GM12878 (cell line): ENCODE measurements at regions of chr10 and their contacts with region 1.

Region 1: DNA sequence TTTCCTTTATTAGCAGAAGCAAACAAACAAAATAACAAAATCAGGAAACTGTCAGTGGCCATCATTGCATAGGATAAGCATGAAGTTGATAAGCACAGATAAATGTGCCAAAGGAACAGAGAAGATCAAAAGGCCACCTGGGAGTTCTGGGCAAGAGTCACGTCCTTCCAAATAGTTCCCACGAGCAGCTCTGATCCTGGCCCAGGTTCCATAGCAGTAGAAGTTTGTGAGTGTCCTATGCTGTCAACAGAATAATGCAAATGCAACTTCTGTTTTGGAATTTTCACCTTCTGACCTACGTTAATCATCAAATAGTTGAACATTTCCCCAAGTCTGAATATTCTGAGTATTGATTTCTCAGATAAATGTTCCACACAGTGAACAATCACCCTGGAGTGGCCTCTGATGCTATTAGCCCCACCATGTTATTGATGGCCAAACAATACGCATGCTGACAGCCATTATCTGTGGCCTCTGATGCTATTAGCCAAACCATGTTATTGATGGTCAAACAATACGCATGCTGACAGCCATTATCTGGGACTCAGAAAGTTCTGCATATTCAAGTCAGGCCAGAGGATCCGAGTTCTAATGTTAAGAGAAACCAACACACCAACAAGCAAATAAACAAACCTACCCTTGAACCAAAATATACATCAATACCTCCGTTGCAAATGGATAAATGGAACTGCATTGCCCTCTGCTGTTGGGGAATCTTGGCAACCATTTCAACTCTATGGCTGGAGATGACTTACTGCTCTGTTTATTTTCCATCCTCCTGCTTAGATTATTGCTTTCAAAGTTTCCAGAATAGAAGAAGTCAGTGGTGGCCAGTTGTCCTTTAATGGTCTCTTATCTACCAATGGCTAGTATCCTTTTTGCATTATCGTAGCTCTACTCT is 63.3 kb downstream of the MRC1 start:
- DNase-seq: no peak
- ATAC-seq: peak; percentile 68
- H3K4me3 ChIP-seq: no peak overlapping the region
- H3K27ac ChIP-seq: no peak overlapping the region
- H3K4me1 ChIP-seq: no peaks in the 10 kb centered on the region
- H3K27me3 ChIP-seq: no peaks in the 10 kb centered on the region
- CTCF ChIP-seq: peak; percentile 33 to 52 (median 35); a peak in 4 of 6 replicates
- EP300 ChIP-seq: no peak
- POLR2A ChIP-seq: no peak
- RAD21 ChIP-seq: peak; percentile 51

Region 2: DNA sequence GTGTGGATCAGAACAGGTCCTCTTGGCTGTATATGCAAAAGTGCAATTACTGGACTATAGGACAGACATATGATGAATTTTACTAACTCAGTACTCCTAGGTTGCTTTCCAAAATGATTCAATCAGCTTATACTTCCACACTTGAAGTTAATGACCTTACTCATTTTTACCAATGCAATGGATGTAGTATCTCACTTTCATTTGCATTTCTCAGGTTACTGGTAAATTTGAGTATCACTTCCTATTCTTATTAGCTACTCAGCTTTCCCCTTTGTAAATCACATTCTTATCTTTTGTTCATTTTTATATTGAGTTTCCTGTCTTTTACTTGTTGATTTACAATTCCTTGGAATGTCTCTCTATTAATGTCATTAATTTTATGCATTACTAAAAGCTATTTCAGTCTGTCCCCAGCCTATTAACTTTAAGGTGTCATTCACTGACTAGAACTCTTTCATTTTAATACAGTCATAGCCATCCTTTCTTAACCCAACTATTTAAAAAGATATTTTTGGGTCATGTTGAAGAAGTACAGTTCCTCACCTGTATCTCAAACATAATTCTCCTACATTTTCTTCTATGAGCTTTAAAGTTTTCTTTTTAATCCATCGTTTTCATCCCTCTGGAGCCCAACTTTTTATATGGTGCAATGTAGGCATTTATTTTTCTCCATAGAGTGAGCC is 555.8 kb before region 1 on chr10:
- CTCF ChIA-PET with region 1: no interaction called
- POLR2A ChIA-PET with region 1: no interaction called
- RAD21 ChIA-PET with region 1: no interaction called
- SMC1A ChIA-PET with region 1: no interaction called
- in situ Hi-C with region 1: no loop called
- intact Hi-C with region 1: loop called (anchors 5 kb)
- DNase-seq: no peak
- ATAC-seq: peak; percentile 77
- H3K4me3 ChIP-seq: no peak overlapping the region
- H3K27ac ChIP-seq: no peak overlapping the region
- H3K4me1 ChIP-seq: no peaks in the 10 kb centered on the region
- H3K27me3 ChIP-seq: no peaks in the 10 kb centered on the region
- CTCF ChIP-seq: no peak
- EP300 ChIP-seq: no peak
- POLR2A ChIP-seq: no peak
- RAD21 ChIP-seq: no peak

Region 3: GRCh38 chr10:17737027-17737965 is 135.1 kb before region 1 on chr10:
- CTCF ChIA-PET with region 1: no interaction called
- POLR2A ChIA-PET with region 1: no interaction called
- RAD21 ChIA-PET with region 1: no interaction called
- SMC1A ChIA-PET with region 1: no interaction called
- in situ Hi-C with region 1: no loop called
- intact Hi-C with region 1: loop called (anchors 2 kb)
- DNase-seq: no peak
- ATAC-seq: peak; percentile 61
- H3K4me3 ChIP-seq: no peak overlapping the region
- H3K27ac ChIP-seq: no peak overlapping the region
- H3K4me1 ChIP-seq: no peaks in the 10 kb centered on the region
- H3K27me3 ChIP-seq: no peaks in the 10 kb centered on the region
- CTCF ChIP-seq: peak; percentile 40 to 63 (median 58); a peak in 5 of 6 replicates
- EP300 ChIP-seq: no peak
- POLR2A ChIP-seq: no peak
- RAD21 ChIP-seq: peak; percentile 31; the same call in 1 of the 2 replicates

Region 4: GRCh38 chr10:17805921-17806577 is 66.4 kb before region 1 on chr10:
- CTCF ChIA-PET with region 1: no interaction called
- POLR2A ChIA-PET with region 1: no interaction called
- RAD21 ChIA-PET with region 1: interaction called, 3 read pairs
- SMC1A ChIA-PET with region 1: no interaction called
- in situ Hi-C with region 1: no loop called
- intact Hi-C with region 1: loop called (anchors 5 kb)
- DNase-seq: no peak
- ATAC-seq: peak; percentile 98
- H3K4me3 ChIP-seq: no peak overlapping the region
- H3K27ac ChIP-seq: no peak overlapping the region
- H3K4me1 ChIP-seq: no peaks in the 10 kb centered on the region
- H3K27me3 ChIP-seq: peaks cover 0 to 5% of the 10 kb centered on the region in 2 experiments; a peak in 2 of 4 replicates
- CTCF ChIP-seq: peak; percentile 39; a peak in 5 of 6 replicates
- EP300 ChIP-seq: no peak
- POLR2A ChIP-seq: no peak
- RAD21 ChIP-seq: peak; percentile 40

Region 5: GRCh38 chr10:17847585-17848296 is 24.7 kb before region 1 on chr10:
- CTCF ChIA-PET with region 1: interaction called, 17 read pairs
- POLR2A ChIA-PET with region 1: no interaction called
- RAD21 ChIA-PET with region 1: interaction called, 5 read pairs
- SMC1A ChIA-PET with region 1: interaction called, 30 read pairs
- in situ Hi-C with region 1: no loop called
- intact Hi-C with region 1: loop called (anchors 1 kb)
- DNase-seq: no peak
- ATAC-seq: peak; percentile 88
- H3K4me3 ChIP-seq: no peak overlapping the region
- H3K27ac ChIP-seq: no peak overlapping the region
- H3K4me1 ChIP-seq: no peaks in the 10 kb centered on the region
- H3K27me3 ChIP-seq: no peaks in the 10 kb centered on the region; a peak in 1 of 4 replicates
- CTCF ChIP-seq: peak; percentile 14 to 53 (median 38); a peak in 4 of 6 replicates
- EP300 ChIP-seq: no peak
- POLR2A ChIP-seq: no peak
- RAD21 ChIP-seq: peak; percentile 70

Region 6: GRCh38 chr10:17910125-17910789 is 37.8 kb after region 1 on chr10:
- CTCF ChIA-PET with region 1: no interaction called
- POLR2A ChIA-PET with region 1: no interaction called
- RAD21 ChIA-PET with region 1: no interaction called
- SMC1A ChIA-PET with region 1: no interaction called
- in situ Hi-C with region 1: no loop called
- intact Hi-C with region 1: no loop called
- DNase-seq: peak; percentile 2
- ATAC-seq: peak; percentile 85
- H3K4me3 ChIP-seq: no peak overlapping the region
- H3K27ac ChIP-seq: no peak overlapping the region
- H3K4me1 ChIP-seq: no peaks in the 10 kb centered on the region
- H3K27me3 ChIP-seq: no peaks in the 10 kb centered on the region
- CTCF ChIP-seq: peak; percentile 51 to 54 (median 52); a peak in 5 of 6 replicates
- EP300 ChIP-seq: no peak
- POLR2A ChIP-seq: no peak
- RAD21 ChIP-seq: peak; percentile 69

Region 7: GRCh38 chr10:17989908-17990767 is 117.7 kb after region 1 on chr10:
- CTCF ChIA-PET with region 1: no interaction called
- POLR2A ChIA-PET with region 1: no interaction called
- RAD21 ChIA-PET with region 1: no interaction called
- SMC1A ChIA-PET with region 1: no interaction called
- in situ Hi-C with region 1: no loop called
- intact Hi-C with region 1: no loop called
- DNase-seq: peak; percentile 41
- ATAC-seq: peak; percentile 95
- H3K4me3 ChIP-seq: no peak overlapping the region
- H3K27ac ChIP-seq: no peak overlapping the region
- H3K4me1 ChIP-seq: peaks cover 6% of the 10 kb centered on the region
- H3K27me3 ChIP-seq: no peaks in the 10 kb centered on the region
- CTCF ChIP-seq: no peak
- EP300 ChIP-seq: peak; percentile 82 to 85; a peak in 3 of 4 replicates
- POLR2A ChIP-seq: no peak
- RAD21 ChIP-seq: no peak